Naive thymus-derived CD4-positive, alpha-beta T cell (primary cell): ENCODE measurements at regions of chr12 and their contacts with region 1.

Region 1: GRCh38 chr12:53500776-53501614 is at the start of gene TARBP2:
- DNase-seq: peak; percentile 87 to 99 (median 98)
- ATAC-seq: peak; percentile 87
- H3K4me3 ChIP-seq: peak within 1 kb of the TSS; percentile 84
- H3K4me3 Mint-ChIP-seq: peak within 1 kb of the TSS; percentile 86 to 96 (median 92)
- H3K27ac ChIP-seq: peak within 1 kb of the TSS; percentile 98
- H3K27ac Mint-ChIP-seq: peak within 1 kb of the TSS; percentile 87 to 100 (median 97)
- H3K4me1 ChIP-seq: peaks cover 24 to 27% of the 10 kb centered on the region in 2 donors
- H3K4me1 Mint-ChIP-seq: peaks cover 15 to 56% (median 43%) of the 10 kb centered on the region in 7 donors
- H3K27me3 ChIP-seq: no peaks in the 10 kb centered on the region
- H3K27me3 Mint-ChIP-seq: no peaks in the 10 kb centered on the region
- total RNA-seq, gene TARBP2: 25.1 to 45.2 (median 40.7) TPM

Region 2: GRCh38 chr12:53054112-53054833 is 446.7 kb before region 1 on chr12:
- CTCF ChIA-PET with region 1: no interaction called
- POLR2A ChIA-PET with region 1: no interaction called
- intact Hi-C with region 1: loop called in 1 of 2 experiments (anchors 10 kb)
- DNase-seq: peak; percentile 85 to 94 (median 93)
- ATAC-seq: peak; percentile 98
- H3K4me3 ChIP-seq: peak overlapping the region; percentile 95
- H3K4me3 Mint-ChIP-seq: peak overlapping the region; percentile 89 to 97 (median 94)
- H3K27ac ChIP-seq: peak overlapping the region; percentile 71
- H3K27ac Mint-ChIP-seq: peak overlapping the region; percentile 83 to 96 (median 92)
- H3K4me1 ChIP-seq: peaks cover 6 to 9% of the 10 kb centered on the region in 2 donors
- H3K4me1 Mint-ChIP-seq: peaks cover 8 to 14% (median 11%) of the 10 kb centered on the region in 7 donors
- H3K27me3 ChIP-seq: no peaks in the 10 kb centered on the region
- H3K27me3 Mint-ChIP-seq: no peaks in the 10 kb centered on the region

Region 3: GRCh38 chr12:53344824-53345485 is 156.0 kb before region 1 on chr12:
- CTCF ChIA-PET with region 1: interaction called, 3 read pairs
- POLR2A ChIA-PET with region 1: interaction called, 3 read pairs
- intact Hi-C with region 1: loop called in 1 of 2 experiments (anchors 1 kb)
- DNase-seq: peak; percentile 42 to 68 (median 63)
- ATAC-seq: peak; percentile 89
- H3K4me3 ChIP-seq: peak overlapping the region; percentile 79
- H3K4me3 Mint-ChIP-seq: peak overlapping the region; percentile 91 to 100 (median 97)
- H3K27ac ChIP-seq: peak overlapping the region; percentile 66
- H3K27ac Mint-ChIP-seq: peak overlapping the region; percentile 87 to 96 (median 91)
- H3K4me1 ChIP-seq: peaks cover 0 to 10% of the 10 kb centered on the region in 2 donors
- H3K4me1 Mint-ChIP-seq: peaks cover 11 to 25% (median 17%) of the 10 kb centered on the region in 7 donors
- H3K27me3 ChIP-seq: no peaks in the 10 kb centered on the region
- H3K27me3 Mint-ChIP-seq: peaks cover 0 to 13% (median 0%) of the 10 kb centered on the region in 5 donors

Region 4: GRCh38 chr12:53481957-53482586 is 18.9 kb before region 1 on chr12:
- CTCF ChIA-PET with region 1: interaction called, 3 read pairs
- POLR2A ChIA-PET with region 1: interaction called, 47 read pairs
- intact Hi-C with region 1: no loop called
- DNase-seq: peak in 2 of 9 donors; percentile 17 to 33
- ATAC-seq: peak; percentile 61
- H3K4me3 ChIP-seq: no peak overlapping the region
- H3K4me3 Mint-ChIP-seq: no peak overlapping the region
- H3K27ac ChIP-seq: no peak overlapping the region
- H3K27ac Mint-ChIP-seq: peak overlapping the region in 6 of 9 donors; percentile 11 to 76 (median 36)
- H3K4me1 ChIP-seq: no peaks in the 10 kb centered on the region
- H3K4me1 Mint-ChIP-seq: peaks cover 0 to 11% (median 7%) of the 10 kb centered on the region in 7 donors
- H3K27me3 ChIP-seq: no peaks in the 10 kb centered on the region
- H3K27me3 Mint-ChIP-seq: no peaks in the 10 kb centered on the region

Region 5: DNA sequence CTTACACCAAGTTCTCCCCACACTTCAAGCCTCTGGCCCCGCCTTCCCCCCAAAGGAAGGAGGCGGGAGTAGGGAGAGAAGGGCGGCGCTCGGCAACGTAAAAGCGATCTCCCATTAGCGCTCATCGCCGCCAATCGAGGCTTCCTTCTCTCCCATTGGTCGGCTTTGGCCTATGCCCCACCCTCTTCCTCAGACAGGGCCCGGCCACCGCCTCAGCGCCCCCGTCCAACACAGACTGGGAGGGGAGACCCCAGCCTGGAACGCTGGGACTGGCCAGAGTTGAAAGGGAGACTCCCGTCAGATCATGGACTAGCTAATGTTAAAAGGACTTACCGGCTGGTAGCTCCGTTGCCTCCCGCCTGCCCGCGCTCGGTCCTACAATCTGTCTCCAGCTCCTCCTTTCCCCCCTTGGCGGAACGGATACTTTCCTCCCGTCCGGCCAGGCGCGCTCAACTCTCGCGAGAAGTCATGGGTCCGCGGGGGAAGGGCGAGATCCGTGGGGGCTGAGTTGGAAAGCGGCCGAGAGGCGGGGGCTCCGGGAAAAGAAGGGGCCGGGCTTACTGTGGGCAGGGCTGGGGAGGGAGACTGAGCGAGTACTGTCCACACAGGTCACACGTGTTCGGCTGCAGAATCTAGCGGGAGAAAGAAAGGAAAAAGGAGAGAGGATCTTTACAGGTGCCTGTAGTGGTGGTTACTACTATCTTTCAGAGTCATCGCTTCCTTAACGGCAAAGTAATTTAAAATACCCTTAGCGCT is 125.1 kb after region 1 on chr12 and contains the start of gene ATF7:
- CTCF ChIA-PET with region 1: no interaction called
- POLR2A ChIA-PET with region 1: interaction called, 8 read pairs
- intact Hi-C with region 1: loop called (anchors 1 to 2 kb)
- DNase-seq: peak; percentile 95 to 100 (median 99)
- ATAC-seq: peak; percentile 97
- H3K4me3 ChIP-seq: peak within 1 kb of the TSS; percentile 92
- H3K4me3 Mint-ChIP-seq: peak within 1 kb of the TSS; percentile 97 to 100 (median 98)
- H3K27ac ChIP-seq: peak within 1 kb of the TSS; percentile 83
- H3K27ac Mint-ChIP-seq: peak within 1 kb of the TSS; percentile 95 to 99 (median 97)
- H3K4me1 ChIP-seq: peaks cover 20 to 32% of the 10 kb centered on the region in 2 donors
- H3K4me1 Mint-ChIP-seq: peaks cover 30 to 55% (median 49%) of the 10 kb centered on the region in 7 donors
- H3K27me3 ChIP-seq: no peaks in the 10 kb centered on the region
- H3K27me3 Mint-ChIP-seq: peaks cover 0 to 6% (median 0%) of the 10 kb centered on the region in 5 donors
- total RNA-seq, gene ATF7: 21.9 to 39.5 (median 30.9) TPM